HEK293 (cell line): ENCODE measurements at regions of chr2 and their contacts with region 1.

Region 1: GRCh38 chr2:109613922-109614714 is at the starts of genes SEPTIN10 and SOWAHC:
- H3K4me3 ChIP-seq: peak within 1 kb of the TSS; percentile 69
- H3K27ac ChIP-seq: peak within 1 kb of the TSS; percentile 95
- H3K4me1 ChIP-seq: peaks cover 11% of the 10 kb centered on the region
- CTCF ChIP-seq: no peak

Region 2: DNA sequence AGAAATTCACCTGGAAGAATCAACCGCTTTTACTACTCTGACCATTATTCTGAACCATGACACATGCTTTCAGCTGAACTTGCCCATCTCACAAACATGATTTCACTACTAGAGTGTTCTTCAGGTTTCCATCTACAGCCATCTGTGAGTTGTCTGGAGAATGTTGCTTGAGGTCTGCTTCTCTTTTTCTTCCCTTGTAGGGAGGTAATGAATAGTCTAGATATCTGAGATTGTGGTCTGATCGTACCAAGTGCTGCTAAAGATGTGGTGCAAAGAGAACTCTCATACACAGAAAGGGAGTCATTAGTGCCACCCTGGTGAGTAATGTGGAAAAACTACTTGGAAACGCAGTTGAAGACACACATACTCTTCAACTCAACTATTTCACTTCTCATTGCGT is 10.2 kb after region 1 on chr2:
- CTCF ChIA-PET with region 1: no interaction called
- POLR2A ChIA-PET with region 1: interaction called, 18 read pairs
- H3K4me3 ChIP-seq: no peak overlapping the region
- H3K27ac ChIP-seq: no peak overlapping the region
- H3K4me1 ChIP-seq: no peaks in the 10 kb centered on the region
- CTCF ChIP-seq: no peak

Region 3: DNA sequence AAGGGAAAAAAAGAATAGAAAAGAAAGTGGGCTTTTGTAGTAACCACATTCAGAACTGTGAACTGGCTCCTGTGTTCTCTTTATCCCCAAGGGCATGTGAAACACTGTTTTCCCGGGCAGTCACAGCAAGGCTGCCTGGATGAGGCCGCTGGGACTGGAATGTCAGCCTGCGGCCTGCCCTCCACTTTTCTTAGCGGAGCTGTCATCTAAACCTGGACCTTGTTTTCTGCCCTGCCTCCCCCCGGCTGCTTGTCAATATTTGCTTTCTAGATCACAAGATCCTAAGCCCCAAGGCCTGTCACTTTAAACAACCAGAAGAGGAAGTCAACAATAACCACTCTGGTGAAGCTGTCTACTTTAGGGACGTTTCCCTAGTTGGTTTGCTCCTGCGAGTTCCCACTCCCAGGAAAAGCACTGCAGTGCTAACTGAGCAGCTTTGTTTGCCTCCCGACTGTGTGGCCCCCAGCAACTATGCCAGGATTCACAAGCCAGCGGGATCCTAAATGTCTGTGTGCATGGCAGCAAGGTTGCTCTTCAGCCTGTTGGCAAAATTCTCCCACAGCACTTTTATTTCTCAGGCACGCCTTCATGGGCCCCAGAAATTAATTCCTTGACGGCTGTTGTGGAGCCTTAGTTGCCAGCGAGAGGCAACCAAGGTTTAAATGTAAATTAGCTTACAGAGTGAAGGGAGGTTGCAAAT is 30.6 kb after region 1 on chr2:
- CTCF ChIA-PET with region 1: no interaction called
- POLR2A ChIA-PET with region 1: no interaction called
- H3K4me3 ChIP-seq: no peak overlapping the region
- H3K27ac ChIP-seq: no peak overlapping the region
- H3K4me1 ChIP-seq: no peaks in the 10 kb centered on the region
- CTCF ChIP-seq: no peak

Region 4: DNA sequence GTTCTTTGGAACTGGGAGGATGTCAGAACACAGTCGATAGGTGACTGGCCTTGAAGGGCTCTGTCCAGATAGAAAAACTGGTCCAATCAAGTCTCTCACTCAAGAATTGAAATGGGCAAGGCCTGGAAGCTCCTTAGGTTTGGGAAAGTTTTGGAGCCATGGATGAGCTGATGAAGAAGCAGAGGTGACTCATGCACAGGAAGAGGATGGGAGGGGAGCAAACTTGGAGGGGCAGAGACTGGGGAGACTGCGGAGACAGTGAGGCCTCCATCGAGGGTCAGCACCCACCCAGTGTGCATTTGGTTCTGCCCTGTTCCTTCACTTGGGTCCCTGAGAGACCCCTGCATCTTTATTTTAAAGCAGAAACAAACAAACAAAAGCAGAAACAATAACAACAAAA is 41.2 kb after region 1 on chr2:
- CTCF ChIA-PET with region 1: no interaction called
- POLR2A ChIA-PET with region 1: no interaction called
- H3K4me3 ChIP-seq: no peak overlapping the region
- H3K27ac ChIP-seq: no peak overlapping the region
- H3K4me1 ChIP-seq: no peaks in the 10 kb centered on the region
- CTCF ChIP-seq: no peak